CD4-positive, alpha-beta T cell (primary cell): ENCODE measurements at regions of chr5 and their contacts with region 1.

Region 1: GRCh38 chr5:40410231-40410861 is 269.4 kb upstream of the PTGER4 start:
- DNase-seq: peak in 13 of 14 experiments; percentile 44 to 97 (median 66)
- ATAC-seq: peak; percentile 79
- H3K4me3 ChIP-seq: peak overlapping the region; percentile 33
- H3K4me3 Mint-ChIP-seq: peak overlapping the region; percentile 65
- H3K27ac ChIP-seq: peak overlapping the region; percentile 94 to 96
- H3K27ac Mint-ChIP-seq: peak overlapping the region; percentile 87
- H3K4me1 ChIP-seq: peaks cover 53% of the 10 kb centered on the region
- H3K4me1 Mint-ChIP-seq: peaks cover 53% of the 10 kb centered on the region
- H3K27me3 ChIP-seq: no peaks in the 10 kb centered on the region
- H3K27me3 Mint-ChIP-seq: no peaks in the 10 kb centered on the region
- CTCF ChIP-seq: no peak

Region 2: GRCh38 chr5:40089269-40089668 is 321.1 kb before region 1 on chr5:
- CTCF ChIA-PET with region 1: no interaction called
- POLR2A ChIA-PET with region 1: no interaction called
- intact Hi-C with region 1: no loop called
- DNase-seq: no peak
- ATAC-seq: no peak
- H3K4me3 ChIP-seq: no peak overlapping the region
- H3K4me3 Mint-ChIP-seq: no peak overlapping the region
- H3K27ac ChIP-seq: no peak overlapping the region
- H3K27ac Mint-ChIP-seq: no peak overlapping the region
- H3K4me1 ChIP-seq: no peaks in the 10 kb centered on the region
- H3K4me1 Mint-ChIP-seq: no peaks in the 10 kb centered on the region
- H3K27me3 ChIP-seq: no peaks in the 10 kb centered on the region
- H3K27me3 Mint-ChIP-seq: no peaks in the 10 kb centered on the region
- CTCF ChIP-seq: no peak

Region 3: GRCh38 chr5:40367255-40367654 is 43.1 kb before region 1 on chr5:
- CTCF ChIA-PET with region 1: interaction called, 8 read pairs
- POLR2A ChIA-PET with region 1: no interaction called
- intact Hi-C with region 1: loop called in 1 of 2 experiments (anchors 2 kb)
- DNase-seq: peak in 5 of 14 experiments; percentile 19 to 74 (median 43)
- ATAC-seq: peak; percentile 66
- H3K4me3 ChIP-seq: no peak overlapping the region
- H3K4me3 Mint-ChIP-seq: no peak overlapping the region
- H3K27ac ChIP-seq: no peak overlapping the region
- H3K27ac Mint-ChIP-seq: peak overlapping the region; percentile 17
- H3K4me1 ChIP-seq: no peaks in the 10 kb centered on the region
- H3K4me1 Mint-ChIP-seq: peaks cover 7% of the 10 kb centered on the region
- H3K27me3 ChIP-seq: no peaks in the 10 kb centered on the region
- H3K27me3 Mint-ChIP-seq: no peaks in the 10 kb centered on the region
- CTCF ChIP-seq: no peak

Region 4: GRCh38 chr5:40391642-40392041 is 18.7 kb before region 1 on chr5:
- CTCF ChIA-PET with region 1: interaction called, 12 read pairs
- POLR2A ChIA-PET with region 1: interaction called, 16 read pairs
- intact Hi-C with region 1: no loop called
- DNase-seq: no peak
- ATAC-seq: peak; percentile 53
- H3K4me3 ChIP-seq: no peak overlapping the region
- H3K4me3 Mint-ChIP-seq: no peak overlapping the region
- H3K27ac ChIP-seq: no peak overlapping the region
- H3K27ac Mint-ChIP-seq: no peak overlapping the region
- H3K4me1 ChIP-seq: peaks cover 25% of the 10 kb centered on the region
- H3K4me1 Mint-ChIP-seq: peaks cover 47% of the 10 kb centered on the region
- H3K27me3 ChIP-seq: no peaks in the 10 kb centered on the region
- H3K27me3 Mint-ChIP-seq: no peaks in the 10 kb centered on the region
- CTCF ChIP-seq: no peak

Region 5: GRCh38 chr5:40437452-40437861 is 27.1 kb after region 1 on chr5:
- CTCF ChIA-PET with region 1: interaction called, 13 read pairs
- POLR2A ChIA-PET with region 1: interaction called, 43 read pairs
- intact Hi-C with region 1: loop called in 1 of 2 experiments (anchors 1 kb)
- DNase-seq: peak in 5 of 14 experiments; percentile 5 to 74 (median 58)
- ATAC-seq: no peak
- H3K4me3 ChIP-seq: no peak overlapping the region
- H3K4me3 Mint-ChIP-seq: no peak overlapping the region
- H3K27ac ChIP-seq: peak overlapping the region; percentile 32 to 48
- H3K27ac Mint-ChIP-seq: peak overlapping the region; percentile 79
- H3K4me1 ChIP-seq: peaks cover 41% of the 10 kb centered on the region
- H3K4me1 Mint-ChIP-seq: peaks cover 68% of the 10 kb centered on the region
- H3K27me3 ChIP-seq: no peaks in the 10 kb centered on the region
- H3K27me3 Mint-ChIP-seq: no peaks in the 10 kb centered on the region
- CTCF ChIP-seq: no peak

Region 6: DNA sequence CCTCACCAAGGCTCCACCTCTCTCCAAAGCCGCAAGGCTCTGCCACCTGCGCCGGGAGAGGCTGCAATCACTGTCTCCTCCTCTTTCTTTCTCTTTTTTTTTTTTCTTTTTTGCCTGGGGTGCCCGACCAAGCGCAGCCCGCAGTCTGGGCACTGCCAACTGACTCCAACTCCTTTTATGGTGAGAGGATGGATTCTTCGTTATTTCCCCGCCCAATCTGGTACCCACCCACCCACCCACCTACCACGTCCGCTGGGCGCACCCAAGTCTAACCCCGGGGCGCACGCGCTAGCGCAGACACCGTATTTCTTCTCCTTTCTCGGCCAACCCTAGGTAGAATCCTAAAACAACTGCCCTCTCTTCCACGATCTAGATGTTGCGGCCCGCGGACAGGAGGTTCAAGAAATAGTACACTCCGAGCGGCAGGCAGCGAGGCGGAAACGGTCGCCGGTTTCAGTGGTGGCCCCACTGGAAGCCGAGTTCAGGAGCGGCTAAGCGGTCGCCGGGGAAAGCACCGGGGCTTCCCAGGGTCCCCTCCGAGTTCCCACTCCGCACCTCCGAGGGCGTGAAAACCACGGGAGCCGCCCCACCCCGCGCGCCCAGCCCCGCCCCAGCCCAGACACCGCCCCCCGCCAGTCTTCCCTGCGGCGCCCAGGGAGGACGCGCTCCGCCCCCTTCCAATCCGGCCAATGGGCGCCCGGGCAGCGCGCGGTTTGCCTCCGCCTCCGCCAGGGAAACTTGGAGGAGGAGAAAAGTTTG is 269.0 kb after region 1 on chr5:
- CTCF ChIA-PET with region 1: interaction called, 9 read pairs
- POLR2A ChIA-PET with region 1: interaction called, 18 read pairs
- intact Hi-C with region 1: loop called (anchors 2 kb)
- DNase-seq: peak; percentile 79 to 95 (median 88)
- ATAC-seq: peak; percentile 67
- H3K4me3 ChIP-seq: peak overlapping the region; percentile 91
- H3K4me3 Mint-ChIP-seq: peak overlapping the region; percentile 99
- H3K27ac ChIP-seq: peak overlapping the region; percentile 82 to 93
- H3K27ac Mint-ChIP-seq: peak overlapping the region; percentile 84
- H3K4me1 ChIP-seq: peaks cover 38% of the 10 kb centered on the region
- H3K4me1 Mint-ChIP-seq: peaks cover 59% of the 10 kb centered on the region
- H3K27me3 ChIP-seq: no peaks in the 10 kb centered on the region
- H3K27me3 Mint-ChIP-seq: no peaks in the 10 kb centered on the region
- CTCF ChIP-seq: no peak